ENCODE measurements at regions of chr5 and their contacts with region 1.

Region 1: GRCh38 chr5:176415952-176416924 is at the start of gene CLTB:
- DNase-seq: peak; percentile 83 to 97 (median 91)
- ATAC-seq: peak; percentile 91
- H3K4me3 ChIP-seq: peak within 1 kb of the TSS; percentile 68 to 89
- H3K4me3 Mint-ChIP-seq: peak within 1 kb of the TSS; percentile 83
- H3K27ac ChIP-seq: peak within 1 kb of the TSS; percentile 69 to 78
- H3K27ac Mint-ChIP-seq: peak within 1 kb of the TSS; percentile 87
- H3K4me1 ChIP-seq: peaks cover 25% of the 10 kb centered on the region
- H3K4me1 Mint-ChIP-seq: peaks cover 42% of the 10 kb centered on the region
- H3K27me3 ChIP-seq: no peaks in the 10 kb centered on the region
- H3K27me3 Mint-ChIP-seq: no peaks in the 10 kb centered on the region
- CTCF ChIP-seq: peak; percentile 82
- total RNA-seq, gene CLTB: 84.3 to 86.6 TPM

Region 2: DNA sequence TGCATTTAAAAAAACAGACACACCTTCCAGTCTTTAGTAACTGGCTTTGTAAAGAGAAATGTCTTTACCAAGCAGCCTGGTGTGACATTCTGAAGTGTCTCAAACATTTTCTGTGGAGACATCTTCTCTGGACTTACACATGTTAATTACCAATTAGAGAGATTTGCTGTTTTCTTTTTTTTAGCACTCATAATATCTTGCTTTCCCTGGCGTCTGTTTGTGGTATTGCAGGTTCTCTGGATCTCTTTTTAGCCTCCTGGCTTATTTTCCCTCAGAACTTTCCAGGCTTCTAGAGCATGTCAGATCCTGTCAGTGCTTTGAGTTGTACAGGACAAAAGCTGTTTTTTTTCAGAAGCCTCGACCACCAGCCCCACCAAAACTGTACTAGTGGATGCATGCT is 1599.4 kb before region 1 on chr5:
- CTCF ChIA-PET with region 1: no interaction called
- POLR2A ChIA-PET with region 1: no interaction called
- intact Hi-C with region 1: no loop called
- DNase-seq: no peak
- ATAC-seq: no peak
- H3K4me3 ChIP-seq: no peak overlapping the region
- H3K4me3 Mint-ChIP-seq: no peak overlapping the region
- H3K27ac ChIP-seq: no peak overlapping the region
- H3K27ac Mint-ChIP-seq: no peak overlapping the region
- H3K4me1 ChIP-seq: no peaks in the 10 kb centered on the region
- H3K4me1 Mint-ChIP-seq: no peaks in the 10 kb centered on the region
- H3K27me3 ChIP-seq: no peaks in the 10 kb centered on the region
- H3K27me3 Mint-ChIP-seq: peaks cover 8% of the 10 kb centered on the region
- CTCF ChIP-seq: no peak

Region 3: DNA sequence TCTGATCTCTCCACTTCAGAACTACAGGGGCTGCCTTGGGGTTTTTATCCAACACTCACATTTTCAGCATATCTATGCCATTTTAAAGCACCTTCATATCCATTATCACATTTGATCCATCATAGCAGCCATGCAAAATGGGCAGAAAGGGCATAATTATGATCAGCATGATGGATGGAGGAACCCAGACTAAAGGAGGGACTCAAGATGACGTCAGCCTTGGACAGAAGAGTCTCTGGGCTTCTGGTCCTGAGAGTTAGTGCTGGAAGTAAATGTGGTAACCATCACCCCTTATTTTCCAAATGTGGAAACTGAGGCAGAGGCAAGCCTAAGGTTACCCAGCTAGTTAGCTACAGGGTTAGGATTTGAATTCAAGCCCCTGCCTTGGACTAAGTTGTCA is 1245.3 kb before region 1 on chr5:
- CTCF ChIA-PET with region 1: no interaction called
- POLR2A ChIA-PET with region 1: no interaction called
- intact Hi-C with region 1: no loop called
- DNase-seq: no peak
- ATAC-seq: no peak
- H3K4me3 ChIP-seq: no peak overlapping the region
- H3K4me3 Mint-ChIP-seq: no peak overlapping the region
- H3K27ac ChIP-seq: no peak overlapping the region
- H3K27ac Mint-ChIP-seq: no peak overlapping the region
- H3K4me1 ChIP-seq: no peaks in the 10 kb centered on the region
- H3K4me1 Mint-ChIP-seq: no peaks in the 10 kb centered on the region
- H3K27me3 ChIP-seq: no peaks in the 10 kb centered on the region
- H3K27me3 Mint-ChIP-seq: peaks cover 7% of the 10 kb centered on the region
- CTCF ChIP-seq: no peak

Region 4: DNA sequence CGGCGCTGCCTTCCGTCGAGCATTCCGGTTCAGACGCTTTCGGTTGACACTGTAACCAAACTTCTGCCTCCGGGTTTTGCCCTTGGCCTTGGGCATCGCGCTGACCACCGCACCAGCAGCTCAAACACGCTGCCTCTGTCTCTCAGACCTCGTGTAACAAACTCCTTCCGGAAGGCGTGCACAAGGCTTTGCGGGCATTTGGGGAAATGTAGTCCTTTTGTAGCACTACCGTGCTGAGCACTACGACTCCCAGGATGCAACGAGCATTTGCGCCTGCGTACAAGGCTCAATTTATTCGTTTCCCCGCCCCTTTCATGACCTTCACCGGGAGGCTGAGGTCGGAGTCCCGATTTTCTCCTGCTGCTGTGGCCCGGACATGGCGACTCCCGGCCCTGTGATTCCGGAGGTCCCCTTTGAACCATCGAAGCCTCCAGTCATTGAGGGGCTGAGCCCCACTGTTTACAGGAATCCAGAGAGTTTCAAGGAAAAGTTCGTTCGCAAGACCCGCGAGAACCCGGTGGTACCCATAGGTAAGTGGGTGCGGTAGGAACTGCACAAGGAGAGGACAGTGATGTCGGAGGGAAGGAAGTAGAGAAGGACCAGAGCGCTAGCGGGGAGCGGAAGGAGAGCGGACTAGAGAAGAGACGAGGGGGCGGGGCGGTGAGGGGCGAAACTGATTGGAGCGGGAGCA is 27.6 kb before region 1 on chr5 and contains the starts of genes HIGD2A and NOP16:
- CTCF ChIA-PET with region 1: interaction called, 3 read pairs
- POLR2A ChIA-PET with region 1: no interaction called
- intact Hi-C with region 1: loop called (anchors 1 kb)
- DNase-seq: peak; percentile 97 to 100 (median 99)
- ATAC-seq: peak; percentile 90
- H3K4me3 ChIP-seq: peak within 1 kb of the TSS; percentile 87 to 89
- H3K4me3 Mint-ChIP-seq: peak within 1 kb of the TSS; percentile 99
- H3K27ac ChIP-seq: peak within 1 kb of the TSS; percentile 90 to 93
- H3K27ac Mint-ChIP-seq: peak within 1 kb of the TSS; percentile 99
- H3K4me1 ChIP-seq: peaks cover 22% of the 10 kb centered on the region
- H3K4me1 Mint-ChIP-seq: peaks cover 36% of the 10 kb centered on the region
- H3K27me3 ChIP-seq: no peaks in the 10 kb centered on the region
- H3K27me3 Mint-ChIP-seq: no peaks in the 10 kb centered on the region
- CTCF ChIP-seq: no peak
- total RNA-seq, gene HIGD2A: 102 to 106 TPM
- total RNA-seq, gene NOP16: 21.6 to 24.2 TPM

Region 5: DNA sequence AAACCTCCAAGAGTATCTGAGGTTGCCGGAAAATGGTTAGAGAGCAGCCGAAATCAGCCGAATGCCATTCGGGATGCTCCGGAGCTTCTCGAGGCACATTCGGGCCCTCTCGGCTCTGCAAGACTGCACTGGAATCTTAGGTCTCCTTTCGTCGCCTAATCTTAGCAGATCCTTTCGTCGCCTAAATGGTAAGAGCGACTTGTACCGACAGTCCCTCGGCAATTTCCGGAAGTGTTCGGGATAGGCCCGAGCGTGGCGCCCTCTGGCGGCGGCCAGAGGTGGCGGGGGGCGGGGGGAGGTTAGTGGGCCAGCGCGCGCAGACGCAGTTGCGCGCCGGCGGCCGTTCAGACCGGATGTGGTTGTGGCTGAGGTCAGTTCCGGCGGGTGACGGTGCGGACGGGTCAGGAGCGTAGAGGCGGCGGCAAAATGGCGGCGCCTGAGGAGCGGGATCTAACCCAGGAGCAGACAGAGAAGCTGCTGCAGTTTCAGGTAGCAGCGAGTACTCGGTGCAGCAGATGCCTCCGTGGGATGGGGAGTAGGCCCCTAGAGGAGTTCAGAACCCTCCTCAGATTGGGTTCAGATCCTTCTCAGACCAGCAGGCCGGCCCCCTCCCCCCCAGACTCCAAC is 31.9 kb after region 1 on chr5 and contains the start of gene FAF2:
- CTCF ChIA-PET with region 1: interaction called, 21 read pairs
- POLR2A ChIA-PET with region 1: interaction called, 6 read pairs
- intact Hi-C with region 1: loop called (anchors 1 kb)
- DNase-seq: peak; percentile 94 to 100 (median 98)
- ATAC-seq: peak; percentile 96
- H3K4me3 ChIP-seq: peak within 1 kb of the TSS; percentile 75 to 86
- H3K4me3 Mint-ChIP-seq: peak within 1 kb of the TSS; percentile 99
- H3K27ac ChIP-seq: peak within 1 kb of the TSS; percentile 89 to 90
- H3K27ac Mint-ChIP-seq: peak within 1 kb of the TSS; percentile 99
- H3K4me1 ChIP-seq: peaks cover 26% of the 10 kb centered on the region
- H3K4me1 Mint-ChIP-seq: peaks cover 38% of the 10 kb centered on the region
- H3K27me3 ChIP-seq: no peaks in the 10 kb centered on the region
- H3K27me3 Mint-ChIP-seq: no peaks in the 10 kb centered on the region
- CTCF ChIP-seq: peak; percentile 92
- total RNA-seq, gene FAF2: 24.7 to 24.8 TPM

Region 6: DNA sequence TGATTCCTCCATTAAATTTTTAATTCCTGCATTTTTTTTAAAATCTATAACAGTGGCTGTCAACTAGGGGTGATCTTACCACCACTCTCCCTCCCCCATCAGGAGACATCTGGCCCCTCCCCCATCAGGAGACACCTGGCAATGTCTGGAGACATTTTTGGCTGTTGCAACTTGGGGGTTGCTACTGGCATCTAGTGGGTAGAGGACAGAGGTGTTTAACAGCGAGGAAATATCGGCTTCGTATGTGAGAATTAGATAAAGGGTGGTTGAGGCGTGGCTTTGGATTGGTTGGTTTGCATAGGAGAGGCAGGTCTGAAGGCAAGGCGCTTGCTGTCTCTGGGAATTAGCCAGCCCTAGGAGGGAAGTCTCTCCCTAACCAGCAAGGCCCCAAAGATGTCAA is 143.4 kb after region 1 on chr5:
- CTCF ChIA-PET with region 1: interaction called, 5 read pairs
- POLR2A ChIA-PET with region 1: no interaction called
- intact Hi-C with region 1: loop called in 1 of 2 experiments (anchors 1 kb)
- DNase-seq: peak in 3 of 9 experiments; percentile 42 to 70 (median 56)
- ATAC-seq: peak; percentile 44
- H3K4me3 ChIP-seq: no peak overlapping the region
- H3K4me3 Mint-ChIP-seq: no peak overlapping the region
- H3K27ac ChIP-seq: no peak overlapping the region
- H3K27ac Mint-ChIP-seq: no peak overlapping the region
- H3K4me1 ChIP-seq: peaks cover 44% of the 10 kb centered on the region
- H3K4me1 Mint-ChIP-seq: peaks cover 45% of the 10 kb centered on the region
- H3K27me3 ChIP-seq: no peaks in the 10 kb centered on the region
- H3K27me3 Mint-ChIP-seq: peaks cover 2% of the 10 kb centered on the region
- CTCF ChIP-seq: no peak

Region 7: DNA sequence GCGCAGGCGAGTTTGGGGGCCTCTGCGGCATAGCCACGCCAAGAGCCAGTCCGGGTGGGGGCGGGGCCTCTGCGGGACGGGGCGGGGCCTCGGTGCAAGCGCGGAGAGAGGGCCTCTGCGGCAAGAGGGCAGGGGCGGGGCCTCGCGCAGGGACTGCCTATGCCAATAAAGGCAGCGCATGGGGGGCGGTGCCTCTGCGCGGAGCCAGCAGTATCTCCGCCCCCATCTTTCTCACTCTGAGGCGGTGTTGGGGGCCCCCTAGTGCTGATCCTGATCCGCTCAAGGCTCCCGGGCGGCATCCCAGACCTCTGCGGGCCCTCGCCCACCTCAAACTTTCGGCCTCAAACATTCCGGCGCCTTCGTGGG is 202.9 kb after region 1 on chr5:
- CTCF ChIA-PET with region 1: no interaction called
- POLR2A ChIA-PET with region 1: no interaction called
- intact Hi-C with region 1: loop called in 1 of 2 experiments (anchors 1 kb)
- DNase-seq: peak; percentile 52 to 89 (median 77)
- ATAC-seq: peak; percentile 98
- H3K4me3 ChIP-seq: peak overlapping the region; percentile 12 to 19
- H3K4me3 Mint-ChIP-seq: peak overlapping the region; percentile 53
- H3K27ac ChIP-seq: no peak overlapping the region
- H3K27ac Mint-ChIP-seq: no peak overlapping the region
- H3K4me1 ChIP-seq: peaks cover 21% of the 10 kb centered on the region
- H3K4me1 Mint-ChIP-seq: peaks cover 8% of the 10 kb centered on the region
- H3K27me3 ChIP-seq: peaks cover 17 to 24% of the 10 kb centered on the region in 2 experiments
- H3K27me3 Mint-ChIP-seq: peaks cover 53% of the 10 kb centered on the region
- CTCF ChIP-seq: peak; percentile 17

Region 8: GRCh38 chr5:176716320-176716719 is 300.1 kb after region 1 on chr5:
- CTCF ChIA-PET with region 1: no interaction called
- POLR2A ChIA-PET with region 1: no interaction called
- intact Hi-C with region 1: no loop called
- DNase-seq: no peak
- ATAC-seq: no peak
- H3K4me3 ChIP-seq: no peak overlapping the region
- H3K4me3 Mint-ChIP-seq: no peak overlapping the region
- H3K27ac ChIP-seq: no peak overlapping the region
- H3K27ac Mint-ChIP-seq: no peak overlapping the region
- H3K4me1 ChIP-seq: no peaks in the 10 kb centered on the region
- H3K4me1 Mint-ChIP-seq: no peaks in the 10 kb centered on the region
- H3K27me3 ChIP-seq: peaks cover 4 to 9% of the 10 kb centered on the region in 2 experiments
- H3K27me3 Mint-ChIP-seq: peaks cover 47% of the 10 kb centered on the region
- CTCF ChIP-seq: no peak

Region 9: DNA sequence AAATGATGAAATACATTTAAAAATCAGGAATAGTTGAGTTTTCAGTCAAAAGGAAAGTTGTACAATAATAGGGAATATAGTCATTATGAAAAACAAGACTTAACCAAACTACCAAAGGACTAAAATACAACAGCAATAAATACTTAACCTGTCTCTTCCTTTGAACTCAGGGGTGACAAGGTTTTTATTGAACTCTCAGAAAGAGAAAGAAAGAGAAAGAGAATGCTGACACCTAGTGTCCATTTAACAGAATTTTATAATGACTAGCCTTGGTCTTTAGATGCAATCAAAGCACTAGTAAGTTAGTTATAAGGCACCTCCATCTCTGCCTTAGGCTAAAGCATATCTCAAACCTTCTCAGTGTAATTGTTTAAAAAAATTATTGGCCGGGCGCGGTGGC is 542.8 kb after region 1 on chr5:
- CTCF ChIA-PET with region 1: no interaction called
- POLR2A ChIA-PET with region 1: no interaction called
- intact Hi-C with region 1: loop called in 1 of 2 experiments (anchors 5 kb)
- DNase-seq: peak in 2 of 9 experiments; percentile 51 to 64
- ATAC-seq: peak; percentile 64
- H3K4me3 ChIP-seq: no peak overlapping the region
- H3K4me3 Mint-ChIP-seq: no peak overlapping the region
- H3K27ac ChIP-seq: no peak overlapping the region
- H3K27ac Mint-ChIP-seq: no peak overlapping the region
- H3K4me1 ChIP-seq: no peaks in the 10 kb centered on the region
- H3K4me1 Mint-ChIP-seq: peaks cover 6% of the 10 kb centered on the region
- H3K27me3 ChIP-seq: no peaks in the 10 kb centered on the region
- H3K27me3 Mint-ChIP-seq: no peaks in the 10 kb centered on the region
- CTCF ChIP-seq: peak; percentile 56

Measured in CD8-positive, alpha-beta T cell (primary cell).